ENCODE measurements at regions of chr19 and their contacts with region 1.

Region 1: DNA sequence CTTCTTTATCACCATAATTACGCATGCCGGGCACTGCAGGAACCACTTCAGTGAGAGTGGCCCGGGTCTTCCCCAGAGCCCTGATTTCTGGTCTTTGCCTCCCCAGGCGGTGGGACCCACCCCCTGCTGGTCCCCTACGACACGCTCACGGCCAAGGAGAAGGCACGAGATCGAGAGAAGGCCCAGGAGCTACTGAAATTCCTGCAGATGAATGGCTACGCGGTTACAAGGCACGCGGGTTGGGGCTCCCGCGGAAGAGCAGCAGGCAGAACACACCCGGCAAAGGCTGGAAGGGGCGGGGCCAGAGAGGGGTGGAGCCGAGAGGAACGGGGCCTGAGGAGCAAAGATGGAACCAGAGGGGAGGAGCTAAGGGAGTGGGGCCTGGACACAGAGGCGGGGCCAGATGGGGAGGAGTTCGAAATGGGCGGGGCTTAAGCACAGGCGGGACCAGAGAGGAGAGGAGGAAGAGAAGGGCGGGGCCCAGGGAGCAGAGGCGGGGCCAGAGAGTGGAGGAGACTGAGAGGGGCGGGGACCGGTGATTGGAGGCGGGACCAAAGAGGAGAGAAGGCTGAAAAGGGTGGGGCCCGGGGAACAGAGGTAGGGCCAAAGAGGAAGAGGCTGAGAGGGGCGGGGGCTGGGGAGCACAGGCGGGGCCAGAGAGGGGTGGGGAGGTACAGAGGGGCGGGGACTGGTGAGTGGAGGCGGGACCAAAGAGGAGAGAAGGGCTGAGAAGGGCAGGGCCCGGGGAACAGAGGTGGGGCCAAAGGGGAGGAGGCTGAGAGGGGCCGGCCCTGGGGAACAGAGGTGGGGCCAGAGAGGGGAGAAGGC is 73.4 kb downstream of the RYR1 start:
- DNase-seq: peak; percentile 100
- ATAC-seq: peak; percentile 86
- H3K4me3 ChIP-seq: peak overlapping the region; percentile 29 to 64
- H3K27ac ChIP-seq: peak overlapping the region; percentile 58
- H3K4me1 ChIP-seq: peaks cover 8% of the 10 kb centered on the region
- H3K27me3 ChIP-seq: 0 out of 2 replicates have a peak, but pooled peaks cover 3% of the 10 kb centered on the region
- CTCF ChIP-seq: no peak

Region 2: DNA sequence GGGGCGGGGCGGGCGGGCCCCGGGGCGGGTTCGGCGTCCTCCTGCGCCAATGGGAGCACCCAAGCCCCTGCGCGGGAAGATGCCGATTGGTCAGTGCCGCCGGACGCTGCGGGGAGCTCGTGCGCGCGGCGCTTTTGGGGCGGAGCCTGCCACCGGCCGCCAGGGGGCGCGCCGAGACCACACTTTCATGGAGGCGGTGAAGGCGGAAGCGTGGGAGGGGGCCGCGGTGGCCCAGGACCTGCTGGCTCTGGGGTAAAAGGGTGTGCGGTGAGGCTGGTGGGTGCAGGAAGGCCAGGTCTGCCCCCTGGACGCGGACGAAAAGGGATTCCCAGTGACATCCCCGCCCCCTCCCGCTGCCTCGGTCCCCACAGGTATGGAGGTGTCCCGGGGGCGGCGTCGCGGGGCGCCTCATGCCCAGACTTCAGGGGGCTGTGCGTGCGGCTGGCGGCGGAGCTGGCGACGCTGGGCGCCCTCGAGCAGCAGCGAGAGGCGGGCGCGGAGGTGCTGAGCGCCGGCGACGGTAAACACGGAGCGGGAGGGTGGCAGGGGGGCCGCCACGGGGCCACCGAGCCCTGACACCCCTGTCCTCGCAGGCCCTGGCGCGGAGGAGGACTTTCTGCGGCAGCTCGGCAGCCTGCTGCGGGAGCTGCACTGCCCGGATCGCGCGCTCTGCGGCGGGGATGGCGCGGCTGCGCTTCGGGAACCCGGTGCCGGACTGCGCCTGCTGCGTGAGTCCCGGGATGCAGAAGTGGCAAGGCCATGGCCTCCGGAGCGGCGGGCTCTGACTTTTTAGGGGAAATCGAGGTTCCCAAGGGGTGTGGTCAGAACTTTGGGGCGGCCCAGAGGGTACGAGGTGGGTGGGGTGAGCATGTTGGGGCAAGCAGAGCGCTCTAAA is 103.7 kb before region 1 on chr19 and contains the start of gene FAM98C:
- CTCF ChIA-PET with region 1: interaction called, 11 read pairs
- POLR2A ChIA-PET with region 1: interaction called, 3 read pairs
- in situ Hi-C with region 1: no loop called
- intact Hi-C with region 1: no loop called
- DNase-seq: peak; percentile 81
- ATAC-seq: peak; percentile 98
- H3K4me3 ChIP-seq: peak within 1 kb of the TSS; percentile 73 to 87
- H3K27ac ChIP-seq: peak within 1 kb of the TSS; percentile 69
- H3K4me1 ChIP-seq: peaks cover 3% of the 10 kb centered on the region; the same call in 1 of the 2 replicates
- H3K27me3 ChIP-seq: no peaks in the 10 kb centered on the region
- CTCF ChIP-seq: peak; percentile 99
- total RNA-seq, gene FAM98C: 24.7 TPM

Region 3: DNA sequence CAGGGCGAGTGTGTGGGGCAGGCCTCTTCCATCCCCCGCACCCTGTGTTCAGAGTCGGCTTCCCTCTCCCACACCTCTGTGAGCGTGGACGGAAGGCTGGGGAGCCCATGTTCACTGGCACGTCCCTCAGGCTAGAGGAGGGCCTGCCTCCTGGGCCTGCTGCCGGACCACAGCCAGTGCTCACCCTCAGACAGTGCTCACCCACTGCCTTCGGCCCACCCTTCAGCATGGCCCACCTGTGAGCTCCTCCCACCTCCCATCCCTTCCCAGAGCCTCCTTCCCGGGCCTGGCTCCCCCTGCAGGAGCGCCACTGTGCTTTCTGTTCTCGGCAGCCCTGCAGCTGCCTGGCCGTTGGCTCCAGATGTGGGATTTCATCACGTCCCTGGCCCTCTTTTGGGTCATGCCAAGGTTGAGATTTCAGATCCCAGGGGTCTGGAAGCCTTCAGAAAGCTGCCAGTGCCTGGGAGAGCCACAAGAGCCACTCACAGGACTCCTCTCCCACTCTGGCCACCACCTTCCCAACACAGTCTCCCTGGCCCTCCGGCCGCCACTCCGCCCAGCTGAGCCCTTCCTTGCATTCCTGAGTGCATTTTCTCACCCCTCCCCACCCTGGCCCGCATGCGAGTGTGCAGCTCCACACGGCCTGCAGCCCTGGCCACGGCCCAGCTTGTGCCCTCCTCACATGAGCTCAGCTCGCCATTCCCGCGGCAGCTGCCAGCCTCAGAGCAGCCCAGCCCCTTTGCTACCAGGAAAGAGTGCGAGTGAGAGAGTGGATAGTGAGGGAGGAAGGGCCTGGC is 212.0 kb after region 1 on chr19:
- CTCF ChIA-PET with region 1: no interaction called
- POLR2A ChIA-PET with region 1: no interaction called
- in situ Hi-C with region 1: no loop called
- intact Hi-C with region 1: no loop called
- DNase-seq: no peak
- ATAC-seq: peak; percentile 15
- H3K4me3 ChIP-seq: no peak overlapping the region
- H3K27ac ChIP-seq: peak overlapping the region; percentile 74
- H3K4me1 ChIP-seq: peaks cover 75% of the 10 kb centered on the region
- H3K27me3 ChIP-seq: no peaks in the 10 kb centered on the region
- CTCF ChIP-seq: no peak

Region 4: DNA sequence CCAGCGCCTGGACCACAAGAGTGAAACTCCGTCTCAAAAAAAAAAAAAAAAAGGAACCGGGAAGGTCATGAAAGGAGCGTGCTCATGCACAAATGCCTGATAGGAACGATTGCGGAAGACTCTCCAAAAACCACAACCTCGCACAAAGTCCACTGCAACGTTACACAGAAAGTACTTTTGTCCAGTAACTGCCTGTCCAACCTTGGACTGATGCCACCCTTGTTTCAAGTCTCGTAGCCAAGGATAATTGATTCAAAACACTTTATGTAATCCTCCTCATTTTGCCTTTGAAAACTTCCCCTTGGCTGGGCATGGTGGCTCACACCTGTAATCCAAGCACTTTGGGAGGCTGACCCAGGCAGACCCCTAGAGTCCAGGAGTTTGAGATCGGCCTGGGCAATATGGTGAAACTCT is 252.7 kb after region 1 on chr19:
- CTCF ChIA-PET with region 1: interaction called, 3 read pairs
- POLR2A ChIA-PET with region 1: interaction called, 10 read pairs
- in situ Hi-C with region 1: no loop called
- intact Hi-C with region 1: no loop called
- DNase-seq: no peak
- ATAC-seq: no peak
- H3K4me3 ChIP-seq: no peak overlapping the region
- H3K27ac ChIP-seq: no peak overlapping the region
- H3K4me1 ChIP-seq: no peaks in the 10 kb centered on the region
- H3K27me3 ChIP-seq: no peaks in the 10 kb centered on the region
- CTCF ChIP-seq: no peak

Region 5: DNA sequence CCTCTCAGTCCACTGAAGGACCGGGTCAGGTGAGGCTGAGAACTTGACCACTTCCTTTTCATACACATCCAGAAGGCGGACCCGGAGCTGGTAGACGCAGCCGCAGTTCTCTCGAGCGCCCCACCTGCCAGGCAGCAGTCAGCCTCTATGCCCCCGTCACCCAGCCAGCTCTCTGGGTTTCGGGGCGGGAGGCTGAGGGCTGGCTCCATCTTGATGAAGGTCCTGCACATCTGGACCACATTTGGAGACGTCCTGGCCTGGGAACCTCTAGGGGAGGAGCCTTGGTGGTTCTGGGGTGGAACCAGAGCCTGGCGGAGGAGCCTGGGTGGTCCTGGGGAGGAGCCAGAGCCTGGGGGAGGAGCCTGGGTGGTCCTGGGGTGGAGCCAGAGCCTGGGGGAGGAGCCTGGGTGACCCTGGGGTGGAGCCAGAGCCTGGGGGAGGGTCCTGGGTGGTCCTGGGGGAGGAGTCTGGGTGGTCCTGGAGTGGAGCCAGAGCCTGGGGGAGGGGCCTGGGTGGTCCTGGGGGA is 438.1 kb after region 1 on chr19:
- CTCF ChIA-PET with region 1: no interaction called
- POLR2A ChIA-PET with region 1: no interaction called
- in situ Hi-C with region 1: no loop called
- intact Hi-C with region 1: no loop called
- DNase-seq: no peak
- ATAC-seq: peak; percentile 17
- H3K4me3 ChIP-seq: no peak overlapping the region
- H3K27ac ChIP-seq: no peak overlapping the region
- H3K4me1 ChIP-seq: no peaks in the 10 kb centered on the region
- H3K27me3 ChIP-seq: no peaks in the 10 kb centered on the region
- CTCF ChIP-seq: no peak

Measured in Panc1 (cell line).